MCF 10A (cell line): ENCODE measurements at regions of chr2 and their contacts with region 1.

Region 1: DNA sequence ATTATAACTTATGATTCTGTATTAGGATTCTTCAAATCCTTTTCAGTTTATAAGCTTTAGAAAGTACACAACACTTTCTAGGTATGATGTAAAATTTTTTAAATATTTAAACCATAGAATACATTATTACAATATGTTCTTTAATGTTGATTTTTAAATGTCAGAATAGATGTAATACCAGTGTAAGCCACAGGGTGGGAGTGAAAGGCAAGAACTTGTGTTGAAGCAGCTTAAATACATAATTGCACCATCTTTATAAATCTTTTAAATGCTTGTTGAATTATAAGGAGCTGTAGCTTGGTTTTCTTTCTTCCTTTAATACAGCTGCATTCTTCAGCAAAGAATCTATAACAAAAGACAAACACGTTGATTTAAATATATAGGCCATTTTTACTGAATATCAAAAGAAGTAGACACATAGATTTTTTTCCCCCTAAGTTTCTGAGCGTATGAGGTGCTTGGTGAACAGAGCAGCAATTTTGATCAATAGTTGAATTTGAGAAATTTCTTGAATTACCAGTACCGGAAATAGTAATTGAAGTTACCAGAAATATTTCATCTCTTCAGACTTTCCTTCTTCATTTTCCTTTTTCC is 63.0 kb downstream of the TANK start:
- DNase-seq: peak; percentile 51
- H3K4me3 Mint-ChIP-seq: no peak overlapping the region
- H3K27ac Mint-ChIP-seq: no peak overlapping the region
- H3K4me1 Mint-ChIP-seq: peaks cover 6% of the 10 kb centered on the region
- H3K27me3 Mint-ChIP-seq: no peaks in the 10 kb centered on the region
- CTCF ChIP-seq: peak; percentile 61

Region 2: GRCh38 chr2:161208527-161209139 is 14.6 kb before region 1 on chr2:
- CTCF ChIA-PET with region 1: interaction called, 10 read pairs
- POLR2A ChIA-PET with region 1: no interaction called
- intact Hi-C with region 1: no loop called
- DNase-seq: peak; percentile 83
- H3K4me3 Mint-ChIP-seq: no peak overlapping the region
- H3K27ac Mint-ChIP-seq: no peak overlapping the region
- H3K4me1 Mint-ChIP-seq: peaks cover 12% of the 10 kb centered on the region
- H3K27me3 Mint-ChIP-seq: no peaks in the 10 kb centered on the region
- CTCF ChIP-seq: no peak

Region 3: DNA sequence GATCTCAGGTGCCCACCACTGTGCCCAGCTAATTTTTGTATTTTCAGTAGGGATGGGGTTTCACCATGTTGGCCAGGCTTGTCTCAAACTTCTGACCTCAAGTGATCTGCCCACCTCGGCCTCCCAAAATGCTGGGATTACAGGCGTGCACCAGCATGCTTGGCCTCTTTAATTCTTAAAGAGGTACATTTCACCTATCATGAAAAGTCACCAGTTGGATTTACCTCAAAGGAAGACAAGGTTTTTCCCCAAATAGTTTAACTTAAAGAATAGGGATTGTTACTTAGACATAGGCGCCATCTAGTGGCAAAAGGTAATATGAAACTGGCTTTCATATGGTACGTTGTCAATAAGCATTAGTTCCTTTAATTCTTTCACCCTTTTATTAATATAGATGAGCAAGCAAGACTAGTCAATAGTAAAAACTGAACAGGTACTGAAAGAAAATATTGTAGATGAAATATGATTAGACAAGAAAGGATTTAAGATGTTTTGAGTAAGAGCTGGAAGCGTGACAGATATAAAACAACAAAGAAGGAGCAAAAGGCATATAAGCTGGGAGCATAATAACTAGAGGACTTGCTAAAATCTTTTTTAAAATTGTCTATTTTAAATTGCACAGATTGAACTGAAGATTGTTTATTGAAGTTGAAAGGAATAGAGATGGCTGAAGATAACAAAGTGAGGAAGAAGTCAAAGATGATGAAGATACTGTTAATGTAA is 50.0 kb after region 1 on chr2:
- CTCF ChIA-PET with region 1: interaction called, 9 read pairs
- POLR2A ChIA-PET with region 1: no interaction called
- intact Hi-C with region 1: loop called (anchors 1 kb)
- DNase-seq: peak; percentile 65
- H3K4me3 Mint-ChIP-seq: no peak overlapping the region
- H3K27ac Mint-ChIP-seq: no peak overlapping the region
- H3K4me1 Mint-ChIP-seq: peaks cover 5% of the 10 kb centered on the region
- H3K27me3 Mint-ChIP-seq: no peaks in the 10 kb centered on the region
- CTCF ChIP-seq: peak; percentile 73